PC-9 (cell line): ENCODE measurements at regions of chr10 and their contacts with region 1.

Region 1: DNA sequence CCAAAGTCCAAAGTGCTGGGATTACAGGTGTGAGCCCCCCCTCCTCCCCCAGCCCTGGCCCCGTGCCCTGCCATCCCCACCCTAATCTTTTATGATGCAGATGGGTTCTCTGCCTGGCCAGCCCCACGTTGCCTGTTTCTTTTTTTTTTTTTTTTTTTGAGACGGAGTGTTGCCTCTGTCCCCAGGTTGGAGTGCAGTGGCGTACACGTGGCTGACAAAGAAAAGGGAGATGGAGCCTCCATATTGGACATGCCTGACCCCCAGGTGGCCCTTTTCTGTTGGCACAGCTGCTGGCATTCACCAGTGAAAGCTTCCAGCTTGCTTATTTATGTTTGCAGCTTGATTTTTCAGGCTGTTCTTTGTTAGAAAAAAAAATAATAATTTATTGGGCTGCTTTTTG is 235.3 kb downstream of the CCDC3 start:
- DNase-seq: no peak
- H3K4me3 ChIP-seq: no peak overlapping the region
- H3K27ac ChIP-seq: no peak overlapping the region
- H3K4me1 ChIP-seq: no peaks in the 10 kb centered on the region
- H3K27me3 ChIP-seq: no peaks in the 10 kb centered on the region
- CTCF ChIP-seq: no peak

Region 2: DNA sequence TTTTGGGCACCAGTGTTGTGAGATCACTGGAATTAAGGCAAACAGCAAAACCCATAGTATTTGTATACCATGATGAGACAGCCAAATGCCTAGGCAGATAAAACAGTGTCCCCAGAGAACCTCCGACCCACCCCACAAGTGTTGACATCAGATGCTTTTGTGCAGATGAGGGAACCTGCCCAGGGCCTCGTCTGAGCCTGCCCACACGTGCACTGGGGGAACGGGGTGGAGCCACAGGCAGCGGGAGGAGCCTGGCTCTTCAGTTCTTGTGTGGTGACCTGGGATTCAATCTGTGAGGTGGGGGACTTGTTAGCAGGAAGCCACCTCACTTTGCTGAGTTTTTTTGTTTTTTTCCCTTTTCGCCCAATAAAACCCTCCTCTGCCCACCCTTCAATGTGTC is 300.3 kb after region 1 on chr10:
- CTCF ChIA-PET with region 1: no interaction called
- POLR2A ChIA-PET with region 1: no interaction called
- intact Hi-C with region 1: no loop called
- DNase-seq: no peak
- H3K4me3 ChIP-seq: no peak overlapping the region
- H3K27ac ChIP-seq: no peak overlapping the region
- H3K4me1 ChIP-seq: no peaks in the 10 kb centered on the region
- H3K27me3 ChIP-seq: peaks cover 22% of the 10 kb centered on the region
- CTCF ChIP-seq: no peak

Region 3: DNA sequence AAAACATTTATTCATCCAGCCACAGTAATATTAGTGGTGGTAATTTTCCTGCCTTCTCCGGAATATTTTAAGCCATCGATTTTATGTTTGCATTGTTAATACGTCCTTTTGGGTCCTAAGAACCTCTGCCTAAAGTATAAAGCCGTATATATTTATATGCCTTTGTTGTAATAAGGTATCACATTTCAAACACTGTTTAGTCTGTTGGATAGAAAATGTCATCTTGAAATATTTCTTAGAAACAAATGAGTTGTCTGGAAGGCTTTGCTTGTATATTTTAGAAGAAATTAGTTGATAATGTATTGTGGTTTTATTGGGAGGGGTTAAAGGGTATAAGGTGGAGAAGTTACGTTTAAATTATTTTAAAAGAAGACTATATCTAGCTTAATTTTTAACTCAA is 831.7 kb after region 1 on chr10:
- CTCF ChIA-PET with region 1: no interaction called
- POLR2A ChIA-PET with region 1: interaction called, 10 read pairs
- intact Hi-C with region 1: no loop called
- DNase-seq: no peak
- H3K4me3 ChIP-seq: no peak overlapping the region
- H3K27ac ChIP-seq: no peak overlapping the region
- H3K4me1 ChIP-seq: no peaks in the 10 kb centered on the region
- H3K27me3 ChIP-seq: no peaks in the 10 kb centered on the region
- CTCF ChIP-seq: no peak